SK-N-SH (cell line): ENCODE measurements at regions of chr9 and their contacts with region 1.

Region 1: GRCh38 chr9:120755827-120756434 is 37.3 kb downstream of the FBXW2 start:
- DNase-seq: peak; percentile 86
- H3K4me3 ChIP-seq: peak overlapping the region in 1 of 2 experiments; percentile 26; a peak in 1 of 4 replicates
- H3K27ac ChIP-seq: no peak overlapping the region; a peak in 1 of 4 replicates
- H3K4me1 ChIP-seq: peaks cover 0 to 8% of the 10 kb centered on the region in 2 experiments; a peak in 1 of 4 replicates
- H3K27me3 ChIP-seq: no peaks in the 10 kb centered on the region
- CTCF ChIP-seq: peak; percentile 90
- EP300 ChIP-seq: no peak
- RAD21 ChIP-seq: peak; percentile 94

Region 2: DNA sequence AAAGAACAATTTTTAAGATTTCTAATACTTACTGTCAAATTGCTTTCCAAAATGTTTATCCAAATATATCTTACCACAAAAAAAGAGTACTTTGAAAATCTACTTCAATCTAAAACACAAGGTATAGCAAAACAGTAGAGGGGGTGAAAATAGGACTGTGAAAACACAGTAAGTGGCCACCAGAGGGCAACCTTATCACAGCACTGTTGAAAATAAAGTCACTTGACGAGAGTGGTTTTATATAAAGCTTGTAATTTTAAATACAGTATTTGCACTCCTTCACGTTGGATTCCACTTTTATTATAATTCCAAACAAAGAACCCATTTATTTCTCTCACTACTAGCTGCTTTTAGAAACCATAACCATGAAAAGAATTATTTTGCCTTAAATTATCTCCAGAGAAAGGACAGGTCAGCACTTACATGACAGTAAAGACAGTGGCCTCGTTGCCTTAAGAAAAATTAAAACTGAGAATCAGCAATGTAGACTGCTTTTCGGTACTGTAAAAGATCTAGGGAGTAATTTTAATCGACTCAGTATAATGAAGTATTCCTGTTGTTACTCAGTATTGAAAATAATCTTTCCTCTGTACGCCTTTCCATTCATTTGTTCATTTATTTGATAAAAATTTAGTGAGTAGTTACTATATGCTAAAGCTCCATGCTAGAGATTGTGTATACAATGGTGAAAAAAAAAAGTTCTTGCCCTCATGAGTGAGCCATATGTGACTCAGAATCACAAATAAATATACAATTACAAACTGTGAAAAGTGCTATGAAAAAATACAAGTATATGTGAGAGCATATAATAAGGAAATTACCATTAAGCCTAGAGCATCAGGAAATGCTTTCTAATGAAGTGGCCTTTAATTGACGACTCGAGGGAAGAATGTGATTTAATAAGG is 135.9 kb before region 1 on chr9:
- CTCF ChIA-PET with region 1: interaction called, 25 read pairs
- POLR2A ChIA-PET with region 1: no interaction called
- DNase-seq: peak; percentile 67
- H3K4me3 ChIP-seq: peak overlapping the region in 1 of 2 experiments; percentile 36; a peak in 1 of 4 replicates
- H3K27ac ChIP-seq: no peak overlapping the region
- H3K4me1 ChIP-seq: peaks cover 0 to 17% of the 10 kb centered on the region in 2 experiments; a peak in 2 of 4 replicates
- H3K27me3 ChIP-seq: no peaks in the 10 kb centered on the region
- CTCF ChIP-seq: peak; percentile 95
- EP300 ChIP-seq: no peak
- RAD21 ChIP-seq: peak; percentile 92

Region 3: DNA sequence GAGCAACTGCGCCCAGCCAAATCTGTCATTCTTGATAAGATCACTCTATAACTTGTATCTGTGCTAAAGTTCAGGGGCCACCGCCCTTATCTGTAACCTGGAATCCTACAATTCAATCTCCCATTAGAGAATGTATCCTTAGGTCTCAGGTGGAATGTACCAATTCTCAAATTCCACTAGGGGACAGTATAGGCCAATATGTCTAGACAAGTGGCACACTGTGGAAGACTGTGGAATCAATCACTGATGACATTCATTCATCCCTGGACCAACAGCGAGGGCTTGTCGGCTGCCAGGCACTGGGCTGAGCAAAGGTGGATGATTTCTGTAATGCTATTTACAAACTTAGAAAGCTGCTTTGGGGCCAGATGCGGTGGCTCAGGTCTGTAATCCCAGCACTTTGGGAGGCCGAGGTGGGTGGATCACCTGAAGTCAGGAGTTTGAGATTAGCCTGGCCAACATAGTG is 12.9 kb before region 1 on chr9:
- CTCF ChIA-PET with region 1: interaction called, 23 read pairs
- POLR2A ChIA-PET with region 1: no interaction called
- DNase-seq: peak; percentile 71
- H3K4me3 ChIP-seq: no peak overlapping the region; a peak in 1 of 4 replicates
- H3K27ac ChIP-seq: no peak overlapping the region
- H3K4me1 ChIP-seq: no peaks in the 10 kb centered on the region
- H3K27me3 ChIP-seq: no peaks in the 10 kb centered on the region
- CTCF ChIP-seq: peak; percentile 72
- EP300 ChIP-seq: no peak
- RAD21 ChIP-seq: peak; percentile 72

Region 4: DNA sequence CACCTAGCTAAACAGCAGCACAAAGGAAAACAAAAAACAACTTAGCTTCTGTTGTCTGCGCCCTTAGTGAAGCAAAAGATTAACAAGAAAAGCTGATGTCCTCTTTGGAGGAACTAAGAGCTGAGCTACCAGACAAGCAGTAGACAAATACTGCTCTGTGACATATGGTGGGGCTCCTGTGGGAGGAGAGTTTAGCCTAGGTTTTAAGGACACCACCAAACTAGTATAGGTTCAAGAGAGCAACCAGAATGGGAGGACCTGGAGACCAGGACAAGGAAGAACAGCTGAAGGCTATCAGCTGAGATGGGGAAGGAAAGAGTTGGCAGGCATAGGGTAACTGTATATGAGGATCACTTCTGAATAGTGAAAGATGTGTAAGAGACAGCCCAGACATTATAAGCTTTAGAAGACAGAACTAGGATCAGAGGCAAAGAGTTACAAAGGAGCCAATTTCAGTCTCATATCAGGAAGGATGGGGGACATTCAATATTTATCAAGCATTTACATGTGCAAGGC is 10.0 kb after region 1 on chr9:
- CTCF ChIA-PET with region 1: interaction called, 20 read pairs
- POLR2A ChIA-PET with region 1: no interaction called
- DNase-seq: no peak
- H3K4me3 ChIP-seq: no peak overlapping the region
- H3K27ac ChIP-seq: no peak overlapping the region
- H3K4me1 ChIP-seq: no peaks in the 10 kb centered on the region
- H3K27me3 ChIP-seq: no peaks in the 10 kb centered on the region
- CTCF ChIP-seq: no peak
- EP300 ChIP-seq: no peak
- RAD21 ChIP-seq: no peak